ENCODE measurements at regions of chr1 and their contacts with region 1.

Region 1: DNA sequence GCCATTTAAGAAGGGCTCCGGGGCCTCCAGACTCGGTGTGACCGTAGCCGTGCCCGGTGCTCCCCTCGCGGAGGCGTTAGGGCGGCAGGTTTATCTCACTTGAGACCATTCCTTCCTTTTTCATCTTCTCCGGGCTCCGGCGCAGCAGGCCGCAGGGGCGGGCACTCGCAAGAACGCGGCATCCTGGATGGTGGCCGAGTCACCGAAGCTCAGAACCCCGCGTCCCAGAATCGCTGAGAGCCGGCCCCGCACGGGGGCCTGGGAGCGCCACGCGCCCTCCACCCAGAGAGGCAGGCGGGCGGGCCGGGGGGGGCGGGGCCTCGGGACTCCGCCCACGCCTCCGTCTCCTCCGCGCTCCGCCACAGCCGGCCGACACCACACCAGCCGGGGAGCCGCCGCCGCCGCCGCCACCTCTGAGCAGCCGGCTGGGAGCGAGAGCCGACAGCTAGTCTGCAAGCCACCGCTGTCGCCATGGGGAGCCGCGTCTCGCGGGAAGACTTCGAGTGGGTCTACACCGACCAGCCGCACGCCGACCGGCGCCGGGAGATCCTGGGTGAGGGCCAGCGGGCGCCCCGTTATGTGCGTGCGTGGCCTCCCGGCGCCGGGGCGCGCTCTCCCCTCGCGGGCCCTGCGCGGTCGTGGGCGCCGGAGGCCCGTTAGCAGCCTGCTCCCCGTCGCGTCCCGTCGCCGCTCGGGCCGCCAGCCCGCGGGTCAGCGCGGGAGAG is at the start of gene DEGS1:
- DNase-seq: peak; percentile 94
- H3K4me3 ChIP-seq: peak within 1 kb of the TSS; percentile 77 to 99 (median 88)
- H3K27ac ChIP-seq: peak within 1 kb of the TSS; percentile 95 to 99 (median 97)
- H3K4me1 ChIP-seq: peaks cover 0 to 47% (median 39%) of the 10 kb centered on the region in 4 donors
- H3K27me3 ChIP-seq: no peaks in the 10 kb centered on the region
- CTCF ChIP-seq: no peak
- EP300 ChIP-seq: no peak
- POLR2A ChIP-seq: peak; percentile 65 to 70
- total RNA-seq, gene DEGS1: 84.6 to 111 (median 105) TPM

Region 2: GRCh38 chr1:224113918-224114786 is 68.9 kb before region 1 on chr1 and contains the start of gene FBXO28:
- intact Hi-C with region 1: loop called (anchors 5 kb)
- DNase-seq: peak; percentile 98
- H3K4me3 ChIP-seq: peak within 1 kb of the TSS; percentile 71 to 98 (median 84)
- H3K27ac ChIP-seq: peak within 1 kb of the TSS; percentile 90 to 95 (median 92)
- H3K4me1 ChIP-seq: peaks cover 0 to 33% (median 29%) of the 10 kb centered on the region in 4 donors
- H3K27me3 ChIP-seq: peaks cover 0 to 9% (median 0%) of the 10 kb centered on the region in 3 donors
- CTCF ChIP-seq: no peak
- EP300 ChIP-seq: no peak
- POLR2A ChIP-seq: peak; percentile 89 to 90
- total RNA-seq, gene FBXO28: 21.9 to 32.7 (median 26.2) TPM

Region 3: DNA sequence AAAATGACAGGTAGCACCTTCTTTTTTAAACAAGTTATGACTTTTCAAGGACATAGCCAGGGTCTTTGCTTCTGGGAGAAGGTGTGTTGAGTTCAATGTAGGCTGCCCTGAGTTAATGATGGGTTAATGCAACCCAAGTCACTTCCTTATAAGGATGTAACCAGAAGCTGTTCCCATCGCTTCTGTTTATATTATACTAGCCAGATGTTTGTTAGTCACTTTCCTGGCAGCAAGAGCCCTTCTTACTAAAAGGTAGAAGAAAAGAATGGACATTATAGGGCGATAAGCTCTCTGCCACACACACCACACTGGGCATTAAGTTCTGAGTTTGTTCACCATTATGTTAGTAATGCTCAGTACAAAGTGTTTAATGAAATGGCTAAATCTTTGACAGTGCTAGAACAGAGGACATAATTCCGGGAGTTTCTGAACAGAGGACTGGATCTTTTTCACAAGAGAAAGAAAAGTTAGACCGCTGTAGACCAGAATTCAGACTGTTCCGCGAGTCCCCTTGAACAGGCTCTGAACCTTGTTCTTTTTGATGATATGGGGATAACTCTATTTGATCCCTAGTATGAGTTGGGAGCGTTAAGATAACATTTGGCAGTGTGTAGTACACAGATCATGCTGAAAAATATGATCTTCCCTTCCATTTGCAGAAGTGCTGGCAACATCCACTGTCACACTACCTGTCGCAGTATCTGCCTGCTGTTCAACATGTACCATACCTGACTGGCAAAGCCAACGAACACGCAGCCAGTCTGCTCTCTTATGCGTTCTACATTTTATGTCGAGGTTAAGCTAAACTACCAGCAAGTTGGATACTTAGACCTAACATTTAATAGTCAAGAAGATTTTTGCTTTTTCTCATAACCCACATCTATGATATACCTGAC is 41.0 kb after region 1 on chr1:
- intact Hi-C with region 1: loop called (anchors 2 kb)
- DNase-seq: no peak
- H3K4me3 ChIP-seq: peak overlapping the region in 3 of 4 donors; percentile 1 to 23 (median 13)
- H3K27ac ChIP-seq: peak overlapping the region; percentile 51 to 80 (median 76)
- H3K4me1 ChIP-seq: peaks cover 0 to 22% (median 15%) of the 10 kb centered on the region in 4 donors
- H3K27me3 ChIP-seq: no peaks in the 10 kb centered on the region
- CTCF ChIP-seq: no peak
- EP300 ChIP-seq: no peak
- POLR2A ChIP-seq: no peak

Region 4: GRCh38 chr1:224329842-224330753 is 147.1 kb after region 1 on chr1 and contains the start of gene NVL:
- intact Hi-C with region 1: loop called (anchors 5 kb)
- DNase-seq: peak; percentile 87
- H3K4me3 ChIP-seq: peak within 1 kb of the TSS; percentile 71 to 82 (median 78)
- H3K27ac ChIP-seq: peak within 1 kb of the TSS; percentile 79 to 92 (median 84)
- H3K4me1 ChIP-seq: peaks cover 0 to 30% (median 19%) of the 10 kb centered on the region in 4 donors
- H3K27me3 ChIP-seq: no peaks in the 10 kb centered on the region
- CTCF ChIP-seq: no peak
- EP300 ChIP-seq: no peak
- POLR2A ChIP-seq: peak; percentile 38 to 41
- total RNA-seq, gene NVL: 21.4 to 26.6 (median 24.5) TPM